ENCODE measurements at regions of chr1 and their contacts with region 1.

Region 1: DNA sequence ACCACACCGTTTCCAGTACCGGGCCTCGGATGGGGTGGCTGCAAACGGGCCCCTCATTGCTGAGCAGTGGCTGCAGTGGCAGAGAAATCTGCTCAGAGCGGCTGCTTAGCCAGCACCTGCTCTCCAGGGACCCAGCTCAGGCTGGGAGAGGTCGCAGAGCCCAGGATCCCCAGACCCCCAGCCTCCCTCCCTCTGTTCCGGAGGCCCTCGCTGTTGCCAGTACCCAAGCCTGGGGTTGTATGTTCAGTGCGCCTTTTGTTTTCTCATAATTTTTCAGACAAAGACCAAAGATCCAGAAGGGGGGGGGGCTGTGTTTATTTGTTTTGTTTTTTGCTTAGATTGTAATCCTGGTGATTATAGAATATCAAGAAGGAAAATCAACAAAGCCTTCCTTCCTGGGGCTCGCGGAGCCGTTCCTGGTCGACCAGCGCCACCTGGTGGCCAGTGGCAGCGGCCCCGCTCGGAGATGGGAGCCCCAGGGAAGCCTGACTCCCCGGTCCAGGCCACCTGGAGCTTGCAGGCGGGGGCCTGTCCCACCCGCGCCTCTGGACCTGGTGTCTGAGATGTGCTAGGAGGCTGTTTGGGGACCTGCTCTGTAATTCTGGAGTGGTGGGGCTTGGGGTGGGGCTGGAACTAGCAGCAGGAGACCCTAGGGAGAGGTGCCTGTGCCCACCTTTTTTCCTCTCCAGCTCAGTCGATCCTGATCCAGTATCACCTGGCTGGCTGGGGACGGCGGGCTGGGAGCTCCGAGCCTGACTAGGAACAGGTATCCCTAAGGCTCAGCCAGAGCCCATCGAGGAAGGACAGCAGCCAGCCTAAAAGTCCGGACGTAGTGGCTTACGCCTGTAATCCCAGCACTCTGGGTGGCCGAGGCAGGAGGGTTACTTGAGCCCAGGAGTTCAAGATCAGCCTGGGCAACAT is 123.9 kb upstream of the VAMP3 start:
- DNase-seq: peak; percentile 59
- ATAC-seq: peak; percentile 36
- H3K4me3 ChIP-seq: no peak overlapping the region
- H3K4me3 Mint-ChIP-seq: no peak overlapping the region
- H3K27ac ChIP-seq: no peak overlapping the region
- H3K27ac Mint-ChIP-seq: no peak overlapping the region
- H3K4me1 ChIP-seq: no peaks in the 10 kb centered on the region
- H3K4me1 Mint-ChIP-seq: no peaks in the 10 kb centered on the region
- H3K27me3 ChIP-seq: peaks cover 0 to 2% (median 0%) of the 10 kb centered on the region in 4 experiments
- H3K27me3 Mint-ChIP-seq: peaks cover 4% of the 10 kb centered on the region
- CTCF ChIP-seq: peak; percentile 91

Region 2: GRCh38 chr1:7042322-7043190 is 604.7 kb before region 1 on chr1:
- CTCF ChIA-PET with region 1: no interaction called
- POLR2A ChIA-PET with region 1: no interaction called
- intact Hi-C with region 1: loop called (anchors 5 kb)
- DNase-seq: peak; percentile 15
- ATAC-seq: no peak
- H3K4me3 ChIP-seq: no peak overlapping the region
- H3K4me3 Mint-ChIP-seq: no peak overlapping the region
- H3K27ac ChIP-seq: no peak overlapping the region
- H3K27ac Mint-ChIP-seq: no peak overlapping the region
- H3K4me1 ChIP-seq: no peaks in the 10 kb centered on the region
- H3K4me1 Mint-ChIP-seq: no peaks in the 10 kb centered on the region
- H3K27me3 ChIP-seq: no peaks in the 10 kb centered on the region
- H3K27me3 Mint-ChIP-seq: peaks cover 8% of the 10 kb centered on the region
- CTCF ChIP-seq: peak; percentile 48

Region 3: DNA sequence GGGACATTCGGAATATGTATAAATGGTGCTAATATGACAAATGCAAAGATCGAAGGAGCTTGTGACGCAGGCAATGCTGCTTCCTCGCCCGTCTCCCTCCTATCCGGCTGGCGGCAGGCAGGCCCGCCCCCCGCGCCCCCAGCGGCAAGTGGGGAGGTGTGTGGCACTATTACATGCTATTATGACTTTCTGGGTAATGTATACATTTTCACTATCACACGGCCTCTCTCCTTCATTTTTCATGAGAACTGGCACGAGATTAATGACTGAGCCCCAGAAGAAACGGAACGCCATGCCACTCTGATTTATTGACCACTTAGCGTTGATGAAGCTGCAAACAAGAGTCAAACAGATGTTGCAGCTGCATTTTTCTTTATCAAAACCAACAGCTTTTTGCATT is 15.1 kb before region 1 on chr1:
- CTCF ChIA-PET with region 1: no interaction called
- POLR2A ChIA-PET with region 1: no interaction called
- intact Hi-C with region 1: no loop called
- DNase-seq: no peak
- ATAC-seq: no peak
- H3K4me3 ChIP-seq: no peak overlapping the region
- H3K4me3 Mint-ChIP-seq: no peak overlapping the region
- H3K27ac ChIP-seq: no peak overlapping the region
- H3K27ac Mint-ChIP-seq: no peak overlapping the region
- H3K4me1 ChIP-seq: no peaks in the 10 kb centered on the region
- H3K4me1 Mint-ChIP-seq: no peaks in the 10 kb centered on the region
- H3K27me3 ChIP-seq: peaks cover 0 to 11% (median 0%) of the 10 kb centered on the region in 4 experiments
- H3K27me3 Mint-ChIP-seq: peaks cover 23% of the 10 kb centered on the region
- CTCF ChIP-seq: no peak

Measured in B cell (primary cell).